ENCODE measurements at regions of chr1 and their contacts with region 1.

Region 1: GRCh38 chr1:16904560-16905111 is 8.9 kb downstream of the RNU1-2 start:
- DNase-seq: peak; percentile 99
- H3K4me3 Mint-ChIP-seq: no peak overlapping the region
- H3K27ac Mint-ChIP-seq: no peak overlapping the region
- H3K4me1 Mint-ChIP-seq: peaks cover 11% of the 10 kb centered on the region
- H3K27me3 Mint-ChIP-seq: no peaks in the 10 kb centered on the region
- CTCF ChIP-seq: no peak

Region 2: GRCh38 chr1:16613185-16614147 is 291.2 kb before region 1 on chr1 and contains the start of gene NBPF1:
- CTCF ChIA-PET with region 1: no interaction called
- POLR2A ChIA-PET with region 1: interaction called, 14 read pairs
- intact Hi-C with region 1: no loop called
- DNase-seq: peak; percentile 99
- H3K4me3 Mint-ChIP-seq: no peak within 1 kb of the TSS
- H3K27ac Mint-ChIP-seq: no peak within 1 kb of the TSS
- H3K4me1 Mint-ChIP-seq: no peaks in the 10 kb centered on the region
- H3K27me3 Mint-ChIP-seq: no peaks in the 10 kb centered on the region
- CTCF ChIP-seq: no peak
- total RNA-seq, gene NBPF1: 28.9 and 31.5 TPM in 2 replicates

Region 3: DNA sequence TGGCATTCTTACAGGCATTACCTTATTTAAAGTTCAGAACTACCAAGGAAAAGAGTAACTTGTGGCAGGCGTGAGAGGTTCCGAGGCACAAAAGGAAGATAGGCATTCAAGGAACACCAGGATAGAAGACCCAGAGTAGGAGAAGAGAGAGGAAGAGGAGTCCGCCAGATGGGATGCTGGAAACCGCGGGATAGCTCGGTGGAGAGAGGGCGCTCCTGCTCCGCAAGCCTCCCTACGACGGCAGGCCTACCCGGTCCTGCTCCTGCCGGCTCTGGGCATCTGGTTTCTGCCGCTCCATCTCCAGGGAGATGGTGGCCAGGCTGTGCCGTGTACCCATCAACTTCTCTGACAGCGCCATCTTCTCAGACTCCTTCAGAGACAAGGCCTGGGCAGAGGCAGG is 285.9 kb before region 1 on chr1:
- CTCF ChIA-PET with region 1: no interaction called
- POLR2A ChIA-PET with region 1: interaction called, 14 read pairs
- intact Hi-C with region 1: no loop called
- DNase-seq: no peak
- H3K4me3 Mint-ChIP-seq: no peak overlapping the region
- H3K27ac Mint-ChIP-seq: no peak overlapping the region
- H3K4me1 Mint-ChIP-seq: no peaks in the 10 kb centered on the region
- H3K27me3 Mint-ChIP-seq: no peaks in the 10 kb centered on the region
- CTCF ChIP-seq: no peak

Region 4: GRCh38 chr1:16644193-16644481 is 260.5 kb before region 1 on chr1:
- CTCF ChIA-PET with region 1: no interaction called
- POLR2A ChIA-PET with region 1: interaction called, 11 read pairs
- intact Hi-C with region 1: no loop called
- DNase-seq: no peak
- H3K4me3 Mint-ChIP-seq: no peak overlapping the region
- H3K27ac Mint-ChIP-seq: no peak overlapping the region
- H3K4me1 Mint-ChIP-seq: no peaks in the 10 kb centered on the region
- H3K27me3 Mint-ChIP-seq: no peaks in the 10 kb centered on the region
- CTCF ChIP-seq: no peak

Region 5: GRCh38 chr1:16926491-16927073 is 21.9 kb after region 1 on chr1:
- CTCF ChIA-PET with region 1: no interaction called
- POLR2A ChIA-PET with region 1: interaction called, 21 read pairs
- intact Hi-C with region 1: no loop called
- DNase-seq: no peak
- H3K4me3 Mint-ChIP-seq: no peak overlapping the region
- H3K27ac Mint-ChIP-seq: peak overlapping the region; percentile 36
- H3K4me1 Mint-ChIP-seq: peaks cover 35% of the 10 kb centered on the region
- H3K27me3 Mint-ChIP-seq: no peaks in the 10 kb centered on the region
- CTCF ChIP-seq: no peak

Region 6: GRCh38 chr1:16946646-16947045 is 42.0 kb after region 1 on chr1:
- CTCF ChIA-PET with region 1: interaction called, 3 read pairs
- POLR2A ChIA-PET with region 1: interaction called, 20 read pairs
- intact Hi-C with region 1: no loop called
- DNase-seq: no peak
- H3K4me3 Mint-ChIP-seq: no peak overlapping the region
- H3K27ac Mint-ChIP-seq: no peak overlapping the region
- H3K4me1 Mint-ChIP-seq: peaks cover 5% of the 10 kb centered on the region
- H3K27me3 Mint-ChIP-seq: no peaks in the 10 kb centered on the region
- CTCF ChIP-seq: no peak

Measured in MCF 10A (cell line).